ENCODE measurements at regions of chr12 and their contacts with region 1.

Region 1: GRCh38 chr12:96194971-96195844 is 1.0 kb downstream of the ELK3 start:
- DNase-seq: peak; percentile 87 to 97 (median 93)
- H3K4me3 ChIP-seq: peak overlapping the region; percentile 67 to 96 (median 82)
- H3K4me3 Mint-ChIP-seq: peak overlapping the region; percentile 90 to 97
- H3K27ac ChIP-seq: peak overlapping the region; percentile 78 to 100
- H3K27ac Mint-ChIP-seq: peak overlapping the region; percentile 94 to 99 (median 98)
- H3K4me1 ChIP-seq: peaks cover 24 to 39% of the 10 kb centered on the region in 2 donors
- H3K4me1 Mint-ChIP-seq: peaks cover 41% of the 10 kb centered on the region
- H3K27me3 ChIP-seq: no peaks in the 10 kb centered on the region
- H3K27me3 Mint-ChIP-seq: peaks cover 0 to 2% (median 0%) of the 10 kb centered on the region in 3 donors
- CTCF ChIP-seq: no peak

Region 2: GRCh38 chr12:96136161-96136560 is 59.0 kb before region 1 on chr12:
- intact Hi-C with region 1: no loop called
- DNase-seq: peak in 1 of 3 donors; percentile 6
- H3K4me3 ChIP-seq: peak overlapping the region in 1 of 3 experiments; percentile 26
- H3K4me3 Mint-ChIP-seq: peak overlapping the region in 1 of 2 donors; percentile 28
- H3K27ac ChIP-seq: peak overlapping the region in 1 of 2 donors; percentile 56
- H3K27ac Mint-ChIP-seq: peak overlapping the region; percentile 24 to 89 (median 71)
- H3K4me1 ChIP-seq: peaks cover 15 to 21% of the 10 kb centered on the region in 2 donors
- H3K4me1 Mint-ChIP-seq: peaks cover 26% of the 10 kb centered on the region
- H3K27me3 ChIP-seq: no peaks in the 10 kb centered on the region
- H3K27me3 Mint-ChIP-seq: peaks cover 0 to 4% (median 1%) of the 10 kb centered on the region in 3 donors
- CTCF ChIP-seq: no peak

Region 3: GRCh38 chr12:96164951-96165811 is 30.0 kb before region 1 on chr12:
- intact Hi-C with region 1: no loop called
- DNase-seq: no peak
- H3K4me3 ChIP-seq: no peak overlapping the region
- H3K4me3 Mint-ChIP-seq: no peak overlapping the region
- H3K27ac ChIP-seq: no peak overlapping the region
- H3K27ac Mint-ChIP-seq: no peak overlapping the region
- H3K4me1 ChIP-seq: peaks cover 3 to 5% of the 10 kb centered on the region in 2 donors
- H3K4me1 Mint-ChIP-seq: peaks cover 7% of the 10 kb centered on the region
- H3K27me3 ChIP-seq: no peaks in the 10 kb centered on the region
- H3K27me3 Mint-ChIP-seq: peaks cover 0 to 3% (median 2%) of the 10 kb centered on the region in 3 donors
- CTCF ChIP-seq: no peak

Region 4: DNA sequence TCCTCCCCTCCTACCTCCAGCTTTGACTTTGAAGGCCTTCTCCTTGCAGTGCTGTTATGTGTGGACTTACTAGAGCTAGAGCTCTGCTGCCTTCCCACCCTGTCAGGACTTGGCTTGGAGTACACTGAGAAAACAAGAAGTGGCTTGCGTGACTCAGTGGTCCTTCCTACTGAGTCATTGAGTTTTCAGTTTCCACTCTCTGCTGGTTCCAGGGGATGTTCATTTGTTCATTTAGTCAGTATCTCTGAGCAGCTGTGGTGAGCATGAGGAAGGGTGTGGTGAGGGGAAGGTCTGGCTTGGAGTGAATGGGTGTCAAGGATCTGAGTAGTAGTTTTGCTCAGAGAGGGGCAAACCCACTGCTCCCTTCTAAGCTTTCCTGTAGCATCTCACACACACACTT is 18.2 kb before region 1 on chr12:
- intact Hi-C with region 1: loop called in 1 of 2 experiments (anchors 2 kb)
- DNase-seq: peak; percentile 93 to 98 (median 96)
- H3K4me3 ChIP-seq: no peak overlapping the region
- H3K4me3 Mint-ChIP-seq: peak overlapping the region in 1 of 2 donors; percentile 30
- H3K27ac ChIP-seq: peak overlapping the region; percentile 55 to 83
- H3K27ac Mint-ChIP-seq: peak overlapping the region; percentile 80 to 95 (median 93)
- H3K4me1 ChIP-seq: peaks cover 22 to 32% of the 10 kb centered on the region in 2 donors
- H3K4me1 Mint-ChIP-seq: peaks cover 36% of the 10 kb centered on the region
- H3K27me3 ChIP-seq: no peaks in the 10 kb centered on the region
- H3K27me3 Mint-ChIP-seq: peaks cover 0 to 5% (median 2%) of the 10 kb centered on the region in 3 donors
- CTCF ChIP-seq: no peak

Region 5: DNA sequence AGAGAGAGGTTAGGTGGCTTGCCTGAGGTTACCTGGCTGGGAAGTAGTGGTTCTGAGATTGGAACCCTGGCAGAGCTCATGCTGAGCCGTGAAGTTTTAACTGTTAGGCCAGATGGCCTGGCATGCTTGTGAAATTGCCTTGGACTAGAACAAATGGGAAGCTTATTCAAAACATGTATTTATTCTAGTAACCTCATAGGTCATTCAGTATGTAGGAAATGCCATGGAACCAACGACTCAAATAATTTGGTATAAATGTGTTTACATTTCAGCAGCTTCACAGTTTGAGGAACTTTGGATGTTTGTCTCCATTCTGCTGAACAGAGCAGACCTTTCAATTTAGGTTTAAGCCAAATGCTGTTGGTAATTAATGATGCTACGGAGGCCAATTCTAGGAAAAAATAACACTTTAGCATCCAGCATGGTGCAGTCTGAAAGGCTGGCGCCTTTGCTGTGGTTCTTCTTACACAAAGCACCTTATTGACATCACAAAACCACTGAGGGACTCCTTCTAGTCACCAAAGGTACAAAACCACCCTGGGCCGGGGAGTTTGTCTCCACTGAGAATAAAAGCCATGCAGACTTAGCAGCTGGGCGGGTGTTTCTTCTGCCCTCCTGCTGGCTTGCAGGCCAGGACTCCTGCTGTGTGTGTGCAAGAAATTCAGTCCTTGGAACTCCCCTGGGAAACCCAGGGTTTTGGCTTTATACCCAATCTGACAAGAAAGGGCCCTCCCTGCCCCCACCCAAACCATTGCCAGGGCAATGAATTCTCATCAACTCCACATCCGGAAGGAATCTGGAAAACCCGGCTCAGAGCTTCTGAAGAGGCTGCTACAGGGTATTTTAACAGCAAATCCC is 63.1 kb after region 1 on chr12:
- intact Hi-C with region 1: no loop called
- DNase-seq: no peak
- H3K4me3 ChIP-seq: no peak overlapping the region
- H3K4me3 Mint-ChIP-seq: no peak overlapping the region
- H3K27ac ChIP-seq: peak overlapping the region in 1 of 2 donors; percentile 18
- H3K27ac Mint-ChIP-seq: peak overlapping the region in 2 of 7 donors; percentile 33 to 71
- H3K4me1 ChIP-seq: no peaks in the 10 kb centered on the region
- H3K4me1 Mint-ChIP-seq: peaks cover 11% of the 10 kb centered on the region
- H3K27me3 ChIP-seq: no peaks in the 10 kb centered on the region
- H3K27me3 Mint-ChIP-seq: no peaks in the 10 kb centered on the region
- CTCF ChIP-seq: no peak